Vagina (tissue), 2 donors: ENCODE measurements at regions of chr14 and their contacts with region 1.

Region 1: DNA sequence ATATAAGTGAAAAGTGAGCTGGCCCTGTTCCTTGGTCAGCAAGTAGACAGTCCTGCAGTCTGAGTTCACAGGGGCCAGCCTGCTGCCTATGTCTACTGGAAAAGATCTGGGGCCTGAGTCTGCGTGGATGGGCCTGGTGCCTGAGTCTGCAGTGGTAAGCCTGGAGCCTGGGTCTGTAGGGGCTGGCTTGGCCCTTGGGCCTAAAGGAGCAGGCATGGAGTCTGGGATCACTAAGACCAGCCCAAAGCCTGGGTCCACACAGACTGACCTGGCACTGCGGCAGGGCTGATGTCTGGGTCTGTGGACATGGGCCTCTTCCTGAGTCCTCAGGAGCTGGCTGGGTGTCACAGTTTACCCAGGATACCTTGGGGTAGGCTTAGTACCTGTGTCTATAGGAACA is 95.4 kb downstream of the KLHL28 start:
- DNase-seq: no peak
- H3K4me3 ChIP-seq: no peak overlapping the region
- H3K27ac ChIP-seq: no peak overlapping the region
- H3K4me1 ChIP-seq: no peaks in the 10 kb centered on the region
- H3K27me3 ChIP-seq: no peaks in the 10 kb centered on the region
- CTCF ChIP-seq: no peak
- POLR2A ChIP-seq: no peak

Region 2: GRCh38 chr14:42994051-42994736 is 1872.1 kb before region 1 on chr14:
- intact Hi-C with region 1: loop called (anchors 5 kb)
- DNase-seq: no peak
- H3K4me3 ChIP-seq: no peak overlapping the region
- H3K27ac ChIP-seq: no peak overlapping the region
- H3K4me1 ChIP-seq: no peaks in the 10 kb centered on the region
- H3K27me3 ChIP-seq: no peaks in the 10 kb centered on the region
- CTCF ChIP-seq: no peak
- POLR2A ChIP-seq: no peak

Region 3: DNA sequence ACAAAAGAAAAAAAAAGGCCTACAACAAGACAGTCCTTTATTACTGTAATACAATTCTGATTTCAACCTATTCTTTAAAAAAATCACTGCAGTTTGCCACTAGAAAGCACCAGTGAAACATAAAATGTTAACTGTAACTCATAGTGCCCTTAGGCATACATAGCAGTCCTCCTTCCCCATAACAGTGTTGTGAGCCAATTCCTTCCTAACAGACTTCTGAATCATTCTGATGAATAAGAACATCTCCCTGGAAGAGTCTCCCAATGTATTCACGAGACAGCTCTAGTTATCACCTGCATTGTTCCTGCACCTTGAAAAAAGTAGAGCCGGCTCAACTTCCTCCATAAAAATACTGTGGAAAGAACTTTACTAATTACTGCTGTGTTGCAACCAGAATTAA is 145.6 kb before region 1 on chr14:
- intact Hi-C with region 1: no loop called
- DNase-seq: no peak
- H3K4me3 ChIP-seq: no peak overlapping the region
- H3K27ac ChIP-seq: no peak overlapping the region
- H3K4me1 ChIP-seq: no peaks in the 10 kb centered on the region
- H3K27me3 ChIP-seq: no peaks in the 10 kb centered on the region
- CTCF ChIP-seq: no peak
- POLR2A ChIP-seq: no peak

Region 4: DNA sequence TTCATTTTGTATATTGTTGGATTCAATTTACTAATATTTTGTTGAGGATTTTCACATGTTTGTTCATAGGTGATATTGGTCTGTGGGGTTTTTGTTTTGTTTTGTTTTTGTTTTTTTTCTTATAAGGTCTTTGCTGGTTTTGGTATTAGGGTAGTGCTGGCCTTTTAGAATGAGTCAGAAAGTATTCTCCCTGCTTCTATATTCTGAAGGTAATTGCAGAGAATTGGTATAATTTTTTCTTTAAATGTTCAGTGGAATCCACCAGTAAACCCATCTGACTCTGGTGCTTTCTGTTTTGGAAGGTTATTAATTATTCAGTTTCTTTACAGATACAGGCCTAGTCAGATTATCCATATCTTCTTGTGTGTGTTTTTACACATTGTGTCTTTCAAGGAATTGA is 104.6 kb after region 1 on chr14:
- intact Hi-C with region 1: no loop called
- DNase-seq: no peak
- H3K4me3 ChIP-seq: no peak overlapping the region
- H3K27ac ChIP-seq: no peak overlapping the region
- H3K4me1 ChIP-seq: peaks cover 50% of the 10 kb centered on the region
- H3K27me3 ChIP-seq: no peaks in the 10 kb centered on the region
- CTCF ChIP-seq: no peak
- POLR2A ChIP-seq: no peak